ENCODE measurements at regions of chr3 and their contacts with region 1.

Region 1: GRCh38 chr3:51669241-51670052 is 1.6 kb upstream of the TEX264 start:
- DNase-seq: peak; percentile 92
- ATAC-seq: peak; percentile 26

Region 2: DNA sequence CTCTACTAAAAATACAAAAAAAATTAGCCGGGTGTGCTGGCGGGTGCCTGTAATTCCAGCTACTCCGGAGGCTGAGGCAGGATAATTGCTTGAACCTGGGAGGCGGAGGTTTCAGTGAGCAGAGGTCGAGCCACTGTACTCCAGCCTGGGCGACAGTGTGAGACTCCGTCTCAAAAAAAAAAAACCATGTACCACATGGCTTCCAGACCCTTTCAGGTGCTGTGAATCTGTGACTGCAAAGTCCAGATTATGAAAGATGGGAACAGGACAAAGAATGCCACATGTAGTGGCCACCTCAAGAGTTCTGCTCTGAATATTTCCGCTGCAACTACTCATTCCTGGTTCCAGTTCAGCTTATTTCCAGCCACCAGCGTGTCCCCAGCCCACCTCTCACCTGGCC is 161.2 kb before region 1 on chr3:
- intact Hi-C with region 1: loop called (anchors 5 kb)
- DNase-seq: no peak
- ATAC-seq: no peak

Region 3: GRCh38 chr3:51734572-51734907 is 65.1 kb after region 1 on chr3:
- intact Hi-C with region 1: no loop called
- DNase-seq: no peak
- ATAC-seq: no peak

Measured in left ventricle myocardium superior (tissue), 1 donor.